GM12878 (cell line): ENCODE measurements at regions of chr19 and their contacts with region 1.

Region 1: DNA sequence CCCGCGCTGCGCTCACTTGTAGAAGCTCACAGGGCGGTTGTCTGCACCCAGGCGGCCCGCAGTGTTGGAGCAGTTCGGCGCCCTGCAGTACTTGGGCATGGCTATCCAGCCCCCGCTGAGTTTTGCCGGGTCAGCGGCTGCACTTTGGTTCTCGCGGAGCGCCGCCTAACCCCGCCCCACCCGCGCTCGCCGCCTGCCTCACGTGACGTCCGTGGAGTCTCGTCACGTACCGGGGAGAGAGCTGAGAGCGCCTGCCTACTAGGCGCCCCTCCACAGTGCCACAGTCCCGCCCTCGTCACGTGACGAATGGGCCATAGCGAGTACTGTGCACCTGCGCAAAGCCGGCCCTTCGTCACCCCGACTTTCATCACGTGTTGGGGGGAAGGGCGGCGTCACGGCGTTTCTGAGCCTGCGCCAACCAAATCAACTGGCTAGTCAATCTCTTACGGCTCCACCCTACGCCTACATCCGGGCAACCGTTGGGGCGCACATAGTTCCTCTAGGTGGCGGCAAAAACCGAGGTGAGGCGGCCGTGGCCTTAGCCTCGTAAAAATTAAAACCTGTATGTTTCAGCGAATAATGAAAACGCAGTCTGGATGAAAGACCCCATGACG is at the start of gene THAP8:
- DNase-seq: peak; percentile 99
- ATAC-seq: peak; percentile 91
- H3K4me3 ChIP-seq: peak within 1 kb of the TSS; percentile 87
- H3K27ac ChIP-seq: peak within 1 kb of the TSS; percentile 92
- H3K4me1 ChIP-seq: peaks cover 3% of the 10 kb centered on the region; the same call in 1 of the 2 replicates
- H3K27me3 ChIP-seq: no peaks in the 10 kb centered on the region
- CTCF ChIP-seq: peak; percentile 45 to 51 (median 50); a peak in 5 of 6 replicates
- EP300 ChIP-seq: no peak
- POLR2A ChIP-seq: peak; percentile 84
- RAD21 ChIP-seq: no peak
- polyA plus RNA-seq, gene THAP8: 0.24 to 0.35 TPM

Region 2: DNA sequence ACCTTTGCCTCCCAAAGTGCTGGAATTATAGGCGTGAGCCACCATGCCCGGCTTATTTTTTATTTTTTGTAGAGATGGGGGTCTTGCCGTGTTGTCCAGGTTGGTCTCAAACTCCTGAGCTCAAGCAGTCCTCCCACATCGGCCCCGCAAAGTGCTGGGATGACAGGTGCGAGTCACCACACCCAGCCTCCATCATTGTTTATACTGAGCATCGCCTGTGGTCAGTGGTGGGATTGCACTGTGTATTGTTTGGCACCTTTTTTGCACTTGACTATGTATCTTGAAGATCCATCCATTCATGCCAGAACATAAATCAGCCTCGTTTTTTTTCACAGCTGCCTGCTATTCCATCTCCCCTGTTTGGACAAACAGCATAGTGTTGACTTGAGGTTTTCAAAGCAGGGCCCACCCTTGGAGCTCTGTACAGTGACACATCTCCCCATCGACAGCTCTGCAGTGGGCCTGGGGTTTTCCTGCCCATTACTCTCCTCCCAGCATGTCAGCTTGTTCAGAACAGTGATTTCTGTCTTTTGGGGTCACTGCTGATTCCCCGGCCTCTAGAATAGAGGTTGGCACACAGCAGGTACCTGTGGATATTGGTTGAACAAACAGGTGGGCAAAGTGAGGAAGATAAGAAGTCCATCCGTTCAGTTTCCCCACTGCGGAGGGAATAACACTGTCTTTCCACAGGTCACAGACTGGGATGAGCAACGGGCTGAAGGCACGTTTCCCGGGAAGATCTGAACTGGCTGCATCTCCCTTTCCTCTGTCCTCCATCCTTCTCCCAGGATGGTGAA is 396.1 kb before region 1 on chr19:
- CTCF ChIA-PET with region 1: no interaction called
- POLR2A ChIA-PET with region 1: interaction called, 12 read pairs
- RAD21 ChIA-PET with region 1: no interaction called
- SMC1A ChIA-PET with region 1: no interaction called
- in situ Hi-C with region 1: no loop called
- intact Hi-C with region 1: no loop called
- DNase-seq: no peak
- ATAC-seq: peak; percentile 44; the same call in 1 of the 3 replicates
- H3K4me3 ChIP-seq: no peak overlapping the region
- H3K27ac ChIP-seq: no peak overlapping the region
- H3K4me1 ChIP-seq: no peaks in the 10 kb centered on the region
- H3K27me3 ChIP-seq: no peaks in the 10 kb centered on the region
- CTCF ChIP-seq: 0 out of 6 replicates have a peak, but pooled peaks of 1 of the 3 experiments have one; percentile 8
- EP300 ChIP-seq: no peak
- POLR2A ChIP-seq: no peak
- RAD21 ChIP-seq: no peak

Region 3: DNA sequence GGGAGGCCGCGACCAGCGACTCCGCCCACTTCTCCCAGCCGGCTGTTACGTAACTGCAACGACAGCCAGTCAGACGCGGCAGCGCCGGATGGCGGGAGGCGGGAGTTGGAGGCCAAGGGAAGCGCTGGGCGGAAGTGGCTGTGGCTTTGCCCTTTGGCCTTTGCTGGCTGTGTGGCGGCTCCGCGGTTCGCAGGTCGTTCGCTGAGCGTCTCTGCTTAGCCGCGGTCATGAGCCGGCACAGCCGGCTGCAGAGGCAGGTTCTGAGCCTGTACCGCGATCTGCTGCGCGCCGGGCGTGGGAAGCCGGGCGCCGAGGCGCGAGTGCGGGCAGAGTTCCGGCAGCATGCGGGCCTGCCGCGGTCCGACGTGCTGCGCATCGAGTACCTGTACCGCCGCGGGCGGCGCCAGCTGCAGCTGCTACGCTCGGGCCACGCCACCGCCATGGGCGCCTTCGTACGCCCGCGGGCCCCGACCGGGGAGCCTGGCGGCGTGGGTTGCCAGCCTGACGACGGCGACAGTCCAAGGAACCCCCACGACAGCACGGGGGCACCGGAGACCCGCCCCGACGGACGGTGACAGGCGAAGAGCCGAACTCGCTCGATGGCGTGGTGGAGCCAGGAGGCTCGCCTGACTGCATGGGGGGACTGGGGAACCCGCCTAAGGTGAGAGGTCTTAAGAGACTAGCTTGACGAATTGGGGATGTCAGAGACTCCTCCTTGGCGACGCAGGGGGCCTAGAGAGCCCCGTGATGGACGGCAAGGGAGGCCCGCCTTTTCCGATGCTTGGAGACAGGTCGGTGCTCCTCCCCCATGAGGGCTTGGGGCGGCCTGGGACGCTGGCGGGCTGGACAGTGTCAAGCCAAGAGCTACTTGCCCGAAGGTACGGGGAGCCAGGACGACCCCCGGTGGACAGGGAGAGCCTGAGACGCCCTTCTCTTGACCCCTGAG is 58.9 kb before region 1 on chr19 and contains the start of gene SDHAF1:
- CTCF ChIA-PET with region 1: interaction called, 4 read pairs
- POLR2A ChIA-PET with region 1: interaction called, 5 read pairs
- RAD21 ChIA-PET with region 1: interaction called, 5 read pairs
- SMC1A ChIA-PET with region 1: interaction called, 3 read pairs
- in situ Hi-C with region 1: no loop called
- intact Hi-C with region 1: loop called (anchors 5 kb)
- DNase-seq: peak; percentile 84
- ATAC-seq: peak; percentile 91
- H3K4me3 ChIP-seq: peak within 1 kb of the TSS; percentile 90
- H3K27ac ChIP-seq: peak within 1 kb of the TSS; percentile 60
- H3K4me1 ChIP-seq: peaks cover 25% of the 10 kb centered on the region
- H3K27me3 ChIP-seq: no peaks in the 10 kb centered on the region
- CTCF ChIP-seq: no peak
- EP300 ChIP-seq: no peak
- POLR2A ChIP-seq: peak; percentile 90
- RAD21 ChIP-seq: no peak
- polyA plus RNA-seq, gene SDHAF1: 0.74 to 3.3 TPM

Region 4: DNA sequence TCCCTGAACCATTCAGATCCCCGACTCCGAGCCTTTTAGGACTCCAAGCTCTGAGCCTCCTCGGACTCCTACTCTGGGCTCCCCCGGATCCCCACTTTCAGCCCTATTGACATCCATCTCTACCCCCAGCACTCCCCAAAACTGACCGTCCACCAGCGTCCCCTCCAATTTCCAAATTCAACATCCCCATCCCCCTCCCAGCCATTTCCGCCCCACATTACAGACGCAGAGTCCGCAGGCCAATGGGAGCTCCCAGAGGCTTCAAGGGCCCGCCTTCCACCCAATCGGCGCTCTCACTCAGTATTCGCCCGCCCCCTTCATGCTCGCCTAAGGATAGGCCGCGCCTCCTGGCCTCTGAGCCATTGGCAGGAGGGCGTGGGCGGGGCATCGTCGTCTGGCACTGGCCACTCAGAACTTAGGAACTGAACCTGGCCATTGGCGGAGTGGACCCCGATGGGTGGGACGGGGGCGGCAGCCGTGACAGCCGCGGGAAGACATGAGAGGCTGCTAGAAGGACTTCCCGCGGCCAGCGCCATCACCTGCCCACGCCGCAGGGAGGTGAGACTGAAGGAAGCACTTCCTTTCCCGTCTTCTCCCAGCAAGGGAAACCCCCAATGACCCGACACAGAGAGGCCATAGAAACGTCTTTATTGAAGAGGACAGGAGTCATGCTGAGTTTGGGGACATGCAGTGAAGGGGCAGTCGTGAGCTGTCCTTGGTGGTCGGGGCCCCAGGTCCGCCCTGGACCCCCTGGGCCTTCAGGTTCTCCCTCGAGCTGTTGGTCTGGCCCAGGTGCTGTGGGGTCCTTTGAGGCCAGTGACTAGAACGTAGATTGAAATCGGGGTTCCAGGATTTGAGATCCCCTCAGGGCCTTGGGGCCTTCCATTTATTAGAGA is 39.9 kb before region 1 on chr19 and contains the start of gene ALKBH6:
- CTCF ChIA-PET with region 1: interaction called, 5 read pairs
- POLR2A ChIA-PET with region 1: interaction called, 7 read pairs
- RAD21 ChIA-PET with region 1: interaction called, 6 read pairs
- SMC1A ChIA-PET with region 1: interaction called, 5 read pairs
- in situ Hi-C with region 1: no loop called
- intact Hi-C with region 1: loop called (anchors 5 kb)
- DNase-seq: peak; percentile 96
- ATAC-seq: peak; percentile 98
- H3K4me3 ChIP-seq: peak within 1 kb of the TSS; percentile 97
- H3K27ac ChIP-seq: peak within 1 kb of the TSS; percentile 91
- H3K4me1 ChIP-seq: no peaks in the 10 kb centered on the region; the same call in 1 of the 2 replicates
- H3K27me3 ChIP-seq: no peaks in the 10 kb centered on the region
- CTCF ChIP-seq: no peak
- EP300 ChIP-seq: no peak
- POLR2A ChIP-seq: peak; percentile 90
- RAD21 ChIP-seq: no peak
- polyA plus RNA-seq, gene ALKBH6: 1.2 to 1.6 TPM